ENCODE measurements at regions of chr7 and their contacts with region 1.

Region 1: GRCh38 chr7:126700807-126701604 is 551.7 kb downstream of the GRM8 start:
- DNase-seq: peak; percentile 79 to 97 (median 86)
- ATAC-seq: peak; percentile 98
- H3K4me3 ChIP-seq: peak overlapping the region; percentile 25
- H3K27ac ChIP-seq: peak overlapping the region; percentile 93
- H3K4me1 ChIP-seq: peaks cover 0 to 45% of the 10 kb centered on the region in 2 experiments; a peak in 3 of 5 replicates
- H3K27me3 ChIP-seq: no peaks in the 10 kb centered on the region
- CTCF ChIP-seq: no peak
- EP300 ChIP-seq: peak; percentile 98
- POLR2A ChIP-seq: peak; percentile 74
- RAD21 ChIP-seq: peak in 1 of 2 experiments; percentile 29; a peak in 2 of 4 replicates

Region 2: GRCh38 chr7:126394406-126394805 is 306.6 kb before region 1 on chr7:
- CTCF ChIA-PET with region 1: no interaction called
- POLR2A ChIA-PET with region 1: no interaction called
- in situ Hi-C with region 1: no loop called
- intact Hi-C with region 1: no loop called
- DNase-seq: no peak
- ATAC-seq: no peak
- H3K4me3 ChIP-seq: no peak overlapping the region
- H3K27ac ChIP-seq: no peak overlapping the region
- H3K4me1 ChIP-seq: no peaks in the 10 kb centered on the region
- H3K27me3 ChIP-seq: no peaks in the 10 kb centered on the region
- CTCF ChIP-seq: no peak
- EP300 ChIP-seq: no peak
- POLR2A ChIP-seq: no peak
- RAD21 ChIP-seq: no peak

Region 3: GRCh38 chr7:126667742-126668366 is 33.2 kb before region 1 on chr7:
- CTCF ChIA-PET with region 1: no interaction called
- POLR2A ChIA-PET with region 1: interaction called, 3 read pairs
- in situ Hi-C with region 1: no loop called
- intact Hi-C with region 1: loop called (anchors 1 kb)
- DNase-seq: peak; percentile 75 to 97 (median 80)
- ATAC-seq: peak; percentile 100
- H3K4me3 ChIP-seq: peak overlapping the region; percentile 62
- H3K27ac ChIP-seq: peak overlapping the region; percentile 76
- H3K4me1 ChIP-seq: peaks cover 3 to 10% of the 10 kb centered on the region in 2 experiments; a peak in 4 of 5 replicates
- H3K27me3 ChIP-seq: no peaks in the 10 kb centered on the region
- CTCF ChIP-seq: no peak
- EP300 ChIP-seq: no peak
- POLR2A ChIP-seq: peak; percentile 94
- RAD21 ChIP-seq: no peak

Region 4: GRCh38 chr7:126840869-126841268 is 139.9 kb after region 1 on chr7:
- CTCF ChIA-PET with region 1: no interaction called
- POLR2A ChIA-PET with region 1: no interaction called
- in situ Hi-C with region 1: no loop called
- intact Hi-C with region 1: no loop called
- DNase-seq: no peak
- ATAC-seq: no peak
- H3K4me3 ChIP-seq: no peak overlapping the region
- H3K27ac ChIP-seq: no peak overlapping the region
- H3K4me1 ChIP-seq: no peaks in the 10 kb centered on the region
- H3K27me3 ChIP-seq: no peaks in the 10 kb centered on the region
- CTCF ChIP-seq: no peak
- EP300 ChIP-seq: no peak
- POLR2A ChIP-seq: no peak
- RAD21 ChIP-seq: no peak